ENCODE measurements at regions of chr1 and their contacts with region 1.

Region 1: DNA sequence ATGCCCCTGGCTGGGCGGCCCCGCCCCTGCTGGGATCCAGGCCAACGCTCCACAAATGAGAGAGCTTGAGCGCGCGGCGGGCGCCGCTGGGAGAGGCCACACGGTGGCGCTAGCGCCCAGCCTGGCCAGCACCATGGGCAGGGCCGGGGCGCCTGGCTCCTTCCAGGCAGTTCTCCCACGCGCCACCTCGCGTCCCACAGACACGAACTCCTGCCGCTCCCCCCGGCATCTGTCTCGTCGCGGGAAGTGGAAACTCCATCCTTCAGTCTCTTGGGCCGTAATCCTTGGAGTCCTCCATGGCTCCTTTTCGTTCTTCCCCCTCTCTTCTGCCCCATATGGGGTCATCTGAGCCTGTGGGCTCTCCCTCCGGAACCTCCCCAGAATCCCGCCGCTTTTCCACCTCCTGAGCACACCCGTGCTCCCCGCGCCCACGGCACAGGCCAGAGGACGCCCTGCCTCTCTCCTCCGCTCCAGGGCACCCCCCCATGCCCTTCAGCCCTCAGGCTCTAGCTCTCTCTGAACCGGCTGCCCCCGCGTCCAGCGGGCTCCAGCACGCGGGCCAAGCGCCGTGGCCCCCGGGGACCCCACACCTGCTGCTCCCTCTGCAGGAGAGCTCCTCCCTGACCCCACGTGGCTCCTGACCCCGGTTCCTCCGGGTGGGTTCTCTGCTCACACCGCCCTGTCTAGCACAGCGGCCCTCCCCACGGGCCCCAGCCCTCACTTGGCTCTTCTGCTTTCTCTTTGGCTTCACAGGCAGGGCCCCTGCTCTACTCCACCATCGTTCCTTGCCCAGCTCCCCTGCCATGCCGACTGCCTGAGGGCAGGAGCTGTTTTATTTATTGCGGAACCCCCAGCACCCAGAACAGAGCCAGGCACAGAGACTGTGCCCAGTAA is 31.9 kb upstream of the EDN2 start:
- DNase-seq: peak; percentile 62 to 99
- H3K4me3 ChIP-seq: peak overlapping the region; percentile 5 to 56 (median 30); a peak in 6 of 8 replicates
- H3K27ac ChIP-seq: no peak overlapping the region
- H3K4me1 ChIP-seq: peaks cover 6 to 8% (median 8%) of the 10 kb centered on the region in 4 experiments
- H3K27me3 ChIP-seq: peaks cover 0 to 9% (median 5%) of the 10 kb centered on the region in 4 experiments; a peak in 5 of 7 replicates
- CTCF ChIP-seq: peak; percentile 87 to 93 (median 88)
- EP300 ChIP-seq: no peak
- POLR2A ChIP-seq: no peak
- RAD21 ChIP-seq: peak; percentile 73 to 77

Region 2: DNA sequence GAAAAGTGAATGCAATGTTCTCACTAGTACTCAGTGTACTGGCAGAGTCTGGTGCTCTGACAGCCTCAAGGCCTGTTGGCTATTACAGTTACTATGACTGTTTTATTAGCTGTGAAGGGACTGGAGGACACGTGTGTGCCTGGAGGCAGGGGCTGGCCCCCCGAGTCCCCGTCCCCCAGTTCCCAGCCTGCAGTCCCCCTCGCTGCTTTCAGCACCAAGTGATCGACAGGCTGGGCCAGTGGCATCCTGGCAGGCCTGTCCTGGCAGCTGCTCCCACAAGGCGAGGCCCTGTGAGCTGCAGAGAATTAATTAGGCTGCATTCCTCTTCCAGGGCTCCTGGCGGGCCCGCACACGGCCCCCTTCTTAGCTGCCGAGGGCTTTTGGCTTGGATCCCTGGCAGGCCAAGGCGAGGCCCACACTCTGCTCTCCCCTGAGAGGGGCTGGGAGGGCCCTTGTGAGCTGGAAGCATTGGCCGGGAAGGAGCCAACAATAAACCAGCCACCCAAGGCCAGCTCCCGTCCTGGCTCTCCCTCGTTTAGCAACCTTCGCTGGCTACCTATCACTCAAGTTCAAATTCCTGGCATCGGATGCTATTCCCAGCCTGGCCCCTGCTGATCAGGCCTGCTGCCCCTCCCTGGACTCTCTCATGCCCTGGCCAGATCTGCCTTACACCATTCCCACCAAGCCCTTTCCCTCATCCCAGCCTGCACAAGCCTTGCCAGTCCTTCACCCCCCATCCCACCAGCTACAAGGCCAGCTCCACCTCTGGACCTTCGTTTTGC is 41.7 kb before region 1 on chr1:
- CTCF ChIA-PET with region 1: interaction called, 10 read pairs
- POLR2A ChIA-PET with region 1: no interaction called
- DNase-seq: no peak
- H3K4me3 ChIP-seq: no peak overlapping the region
- H3K27ac ChIP-seq: no peak overlapping the region
- H3K4me1 ChIP-seq: peaks cover 0 to 5% (median 4%) of the 10 kb centered on the region in 4 experiments; a peak in 2 of 7 replicates
- H3K27me3 ChIP-seq: no peaks in the 10 kb centered on the region
- CTCF ChIP-seq: no peak
- EP300 ChIP-seq: no peak
- POLR2A ChIP-seq: no peak
- RAD21 ChIP-seq: no peak

Region 3: DNA sequence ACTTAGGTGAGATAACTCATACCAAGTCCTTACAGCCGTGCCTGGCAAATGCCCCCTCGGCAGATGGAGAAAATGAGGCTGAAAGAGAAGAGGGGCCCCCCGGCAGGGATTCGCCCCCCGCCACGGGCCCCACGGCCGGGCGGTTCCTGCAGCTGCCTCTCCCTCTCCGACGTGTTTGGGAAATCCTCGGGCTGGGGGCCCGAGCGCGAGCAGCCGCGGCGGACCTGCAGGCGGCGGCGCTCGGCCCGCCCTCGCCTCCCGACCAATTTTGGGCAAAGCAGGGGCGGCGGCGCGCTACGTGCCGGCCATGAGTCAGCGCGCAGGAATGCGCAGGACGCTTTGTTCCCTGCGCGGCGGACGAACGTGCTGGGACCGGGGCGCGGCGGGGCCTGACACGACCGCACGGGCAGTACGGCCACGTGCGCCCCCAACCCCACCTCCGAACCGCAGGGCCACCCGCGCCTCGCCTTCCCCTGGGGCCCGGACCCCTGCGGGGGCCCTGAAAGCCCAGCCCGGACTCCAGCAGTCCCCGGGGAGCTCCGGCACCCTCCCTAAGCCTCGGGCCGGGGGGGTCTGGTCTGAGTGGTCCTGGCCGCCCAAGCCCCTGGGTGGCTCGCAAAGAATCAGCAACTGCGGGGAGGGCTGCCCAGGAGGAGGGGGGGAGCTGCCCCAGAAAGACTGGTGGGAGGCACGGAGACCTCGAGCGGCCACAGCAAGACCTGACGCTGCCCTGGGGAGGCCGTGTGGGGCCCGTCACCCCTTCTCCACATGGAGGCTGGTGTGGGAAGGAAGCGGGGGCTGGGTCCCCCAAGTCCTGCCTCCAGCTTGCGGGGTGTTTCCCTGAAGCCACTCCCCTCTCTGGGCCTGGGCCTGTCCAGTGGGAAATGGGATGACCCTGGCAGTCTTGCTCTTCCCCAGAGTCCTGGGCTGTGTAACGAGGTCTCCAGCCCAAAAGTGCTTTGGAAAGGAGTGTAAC is 20.0 kb before region 1 on chr1:
- CTCF ChIA-PET with region 1: interaction called, 205 read pairs
- POLR2A ChIA-PET with region 1: interaction called, 6 read pairs
- DNase-seq: peak; percentile 69 to 88
- H3K4me3 ChIP-seq: peak overlapping the region; percentile 6 to 51 (median 24); a peak in 6 of 8 replicates
- H3K27ac ChIP-seq: peak overlapping the region; percentile 75; the same call in 1 of the 2 replicates
- H3K4me1 ChIP-seq: peaks cover 0 to 23% (median 17%) of the 10 kb centered on the region in 4 experiments; a peak in 6 of 7 replicates
- H3K27me3 ChIP-seq: peaks cover 0 to 13% (median 11%) of the 10 kb centered on the region in 4 experiments; a peak in 3 of 7 replicates
- CTCF ChIP-seq: 0 out of 4 replicates have a peak, but pooled peaks of 1 of the 3 experiments have one; percentile 5
- EP300 ChIP-seq: peak in 1 of 2 experiments; percentile 71; a peak in 1 of 3 replicates
- POLR2A ChIP-seq: no peak; a peak in 1 of 3 replicates
- RAD21 ChIP-seq: no peak

Region 4: GRCh38 chr1:41504114-41505035 is 12.0 kb before region 1 on chr1:
- CTCF ChIA-PET with region 1: interaction called, 85 read pairs
- POLR2A ChIA-PET with region 1: interaction called, 6 read pairs
- DNase-seq: no peak
- H3K4me3 ChIP-seq: no peak overlapping the region
- H3K27ac ChIP-seq: no peak overlapping the region
- H3K4me1 ChIP-seq: peaks cover 0 to 4% (median 0%) of the 10 kb centered on the region in 4 experiments; a peak in 2 of 7 replicates
- H3K27me3 ChIP-seq: no peaks in the 10 kb centered on the region
- CTCF ChIP-seq: no peak
- EP300 ChIP-seq: no peak
- POLR2A ChIP-seq: no peak
- RAD21 ChIP-seq: no peak

Region 5: GRCh38 chr1:41537788-41538351 is 21.5 kb after region 1 on chr1:
- CTCF ChIA-PET with region 1: interaction called, 17 read pairs
- POLR2A ChIA-PET with region 1: no interaction called
- DNase-seq: no peak
- H3K4me3 ChIP-seq: no peak overlapping the region
- H3K27ac ChIP-seq: no peak overlapping the region
- H3K4me1 ChIP-seq: no peaks in the 10 kb centered on the region
- H3K27me3 ChIP-seq: no peaks in the 10 kb centered on the region
- CTCF ChIP-seq: no peak
- EP300 ChIP-seq: no peak
- POLR2A ChIP-seq: no peak
- RAD21 ChIP-seq: no peak

Region 6: DNA sequence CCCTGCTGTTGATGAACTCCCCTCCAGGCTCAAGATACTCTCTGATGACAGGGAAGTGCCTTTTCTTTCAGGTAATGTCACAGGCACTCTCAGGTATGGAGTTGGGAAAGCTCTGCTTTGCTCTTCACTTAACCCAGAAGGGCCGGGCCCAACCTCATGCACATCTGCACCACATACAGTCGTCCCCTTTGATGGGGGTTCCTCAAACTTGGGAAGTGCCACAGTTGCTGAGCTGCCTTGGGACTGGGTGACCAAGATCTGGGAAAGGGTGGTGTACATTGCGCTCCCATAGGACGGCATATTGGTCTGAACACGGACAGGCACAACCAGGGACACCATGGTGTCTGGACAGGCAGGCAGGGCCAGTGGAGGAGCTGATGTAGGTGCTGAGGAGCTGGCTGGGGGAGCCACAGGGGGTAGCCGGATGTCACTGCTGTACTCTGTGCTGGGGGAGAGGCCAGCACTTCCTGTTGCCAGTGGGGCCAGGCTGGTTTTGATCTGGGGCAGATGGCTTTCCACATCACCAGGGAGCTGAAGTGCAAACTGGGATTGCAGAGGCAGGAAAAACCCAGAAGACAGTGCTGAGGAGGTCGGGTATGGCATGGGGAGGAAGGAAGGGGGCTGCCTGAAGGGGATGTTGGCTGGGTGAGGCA is 64.2 kb after region 1 on chr1:
- CTCF ChIA-PET with region 1: interaction called, 14 read pairs
- POLR2A ChIA-PET with region 1: no interaction called
- DNase-seq: no peak
- H3K4me3 ChIP-seq: no peak overlapping the region
- H3K27ac ChIP-seq: no peak overlapping the region
- H3K4me1 ChIP-seq: no peaks in the 10 kb centered on the region
- H3K27me3 ChIP-seq: no peaks in the 10 kb centered on the region
- CTCF ChIP-seq: no peak
- EP300 ChIP-seq: no peak
- POLR2A ChIP-seq: no peak
- RAD21 ChIP-seq: no peak

Region 7: DNA sequence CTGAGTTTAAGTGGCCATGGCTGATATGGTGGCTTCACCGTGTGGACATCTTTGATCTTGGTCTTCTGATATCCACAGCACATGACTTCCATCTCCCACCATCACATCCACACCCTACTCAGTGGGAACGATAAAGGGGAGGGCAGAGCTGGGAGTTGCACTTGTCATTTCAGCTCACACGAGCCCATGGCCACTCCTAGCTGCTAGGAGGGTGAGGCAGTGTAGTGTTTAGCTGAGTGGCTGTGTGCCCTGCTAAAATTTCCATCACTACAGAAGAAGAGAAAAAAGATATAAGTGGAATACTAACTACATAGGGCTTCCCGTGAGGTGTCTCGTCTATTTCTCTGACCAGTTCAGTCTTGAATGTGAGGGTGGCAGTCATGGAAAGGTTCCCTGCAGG is 91.4 kb after region 1 on chr1:
- CTCF ChIA-PET with region 1: no interaction called
- POLR2A ChIA-PET with region 1: no interaction called
- DNase-seq: no peak
- H3K4me3 ChIP-seq: no peak overlapping the region
- H3K27ac ChIP-seq: no peak overlapping the region
- H3K4me1 ChIP-seq: no peaks in the 10 kb centered on the region; a peak in 1 of 7 replicates
- H3K27me3 ChIP-seq: no peaks in the 10 kb centered on the region; a peak in 1 of 7 replicates
- CTCF ChIP-seq: no peak
- EP300 ChIP-seq: no peak
- POLR2A ChIP-seq: no peak
- RAD21 ChIP-seq: no peak

Region 8: DNA sequence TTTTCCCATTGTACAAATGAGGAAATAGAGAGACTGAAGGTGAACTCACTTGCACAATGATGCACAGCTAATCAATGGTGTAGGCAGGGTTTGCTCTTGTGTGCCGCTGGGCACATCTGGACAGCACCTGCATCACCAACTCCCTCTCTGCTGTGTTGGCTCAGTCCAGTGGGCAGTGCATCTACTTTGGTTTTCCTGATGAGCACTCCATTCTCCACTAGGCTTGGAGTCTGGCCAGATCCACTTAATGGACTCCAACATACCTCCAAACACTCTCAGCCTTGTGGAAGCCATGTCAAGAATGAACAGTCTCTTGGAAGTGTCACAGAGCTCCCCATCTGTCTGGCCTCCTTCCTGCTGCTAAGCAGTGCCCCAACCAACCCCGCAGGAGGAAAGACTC is 250.1 kb after region 1 on chr1:
- CTCF ChIA-PET with region 1: no interaction called
- POLR2A ChIA-PET with region 1: no interaction called
- DNase-seq: no peak
- H3K4me3 ChIP-seq: no peak overlapping the region
- H3K27ac ChIP-seq: no peak overlapping the region
- H3K4me1 ChIP-seq: peaks cover 0 to 2% (median 0%) of the 10 kb centered on the region in 4 experiments; a peak in 2 of 7 replicates
- H3K27me3 ChIP-seq: no peaks in the 10 kb centered on the region
- CTCF ChIP-seq: no peak
- EP300 ChIP-seq: no peak
- POLR2A ChIP-seq: no peak
- RAD21 ChIP-seq: no peak